ENCODE measurements at regions of chr15 and their contacts with region 1.

Region 1: GRCh38 chr15:68304589-68305337 is 27.2 kb downstream of the FEM1B start:
- DNase-seq: no peak
- ATAC-seq: no peak
- H3K4me3 ChIP-seq: no peak overlapping the region
- H3K27ac ChIP-seq: peak overlapping the region in 1 of 2 donors; percentile 20
- H3K4me1 ChIP-seq: no peaks in the 10 kb centered on the region
- H3K27me3 ChIP-seq: no peaks in the 10 kb centered on the region

Region 2: GRCh38 chr15:68252925-68253534 is 51.7 kb before region 1 on chr15:
- intact Hi-C with region 1: loop called in 1 of 2 experiments (anchors 5 kb)
- DNase-seq: no peak
- ATAC-seq: peak; percentile 66
- H3K4me3 ChIP-seq: no peak overlapping the region
- H3K27ac ChIP-seq: no peak overlapping the region
- H3K4me1 ChIP-seq: no peaks in the 10 kb centered on the region
- H3K27me3 ChIP-seq: no peaks in the 10 kb centered on the region

Region 3: GRCh38 chr15:68365140-68365745 is 60.5 kb after region 1 on chr15:
- intact Hi-C with region 1: loop called (anchors 5 kb)
- DNase-seq: no peak
- ATAC-seq: peak; percentile 59
- H3K4me3 ChIP-seq: no peak overlapping the region
- H3K27ac ChIP-seq: peak overlapping the region; percentile 93 to 99
- H3K4me1 ChIP-seq: peaks cover 0 to 10% of the 10 kb centered on the region in 2 donors
- H3K27me3 ChIP-seq: no peaks in the 10 kb centered on the region

Region 4: DNA sequence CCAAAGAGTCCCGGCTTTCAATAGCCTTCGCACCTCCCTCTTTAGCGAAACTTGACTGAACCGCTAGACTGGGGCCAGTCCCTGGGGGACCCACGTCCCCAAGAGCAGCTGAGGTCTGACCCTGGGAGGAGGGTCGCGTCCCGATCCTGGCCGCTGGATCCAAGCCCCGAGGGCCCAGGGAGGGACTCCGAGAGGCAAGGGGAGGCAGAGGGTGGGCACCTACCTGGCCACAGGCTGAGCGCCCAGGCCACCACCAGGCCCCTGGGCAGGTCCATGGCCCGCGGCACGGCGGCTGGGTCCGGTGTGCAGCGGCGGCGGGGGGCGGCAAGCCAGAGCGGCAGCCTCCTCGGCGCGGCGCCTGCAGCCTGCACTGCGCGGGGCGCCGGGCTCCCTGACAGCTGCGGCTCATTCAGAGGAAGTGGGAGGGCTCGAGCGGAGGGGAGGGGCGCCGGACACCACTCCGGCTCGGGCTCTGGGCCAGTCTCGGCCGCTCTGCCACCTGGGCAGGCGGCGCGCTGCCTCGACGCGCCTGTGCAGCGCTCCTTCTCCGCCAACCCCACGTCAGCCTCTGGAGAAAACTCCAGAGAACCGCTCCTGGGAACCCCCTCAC is 127.1 kb after region 1 on chr15 and contains the start of gene ITGA11:
- intact Hi-C with region 1: loop called in 1 of 2 experiments (anchors 5 kb)
- DNase-seq: peak; percentile 87 to 93
- ATAC-seq: peak; percentile 84
- H3K4me3 ChIP-seq: peak within 1 kb of the TSS; percentile 67 to 92
- H3K27ac ChIP-seq: peak within 1 kb of the TSS; percentile 34 to 78
- H3K4me1 ChIP-seq: peaks cover 5 to 6% of the 10 kb centered on the region in 2 donors
- H3K27me3 ChIP-seq: no peaks in the 10 kb centered on the region
- total RNA-seq, gene ITGA11: 138 to 154 TPM

Region 5: GRCh38 chr15:68672781-68673205 is 368.0 kb after region 1 on chr15:
- intact Hi-C with region 1: loop called (anchors 2 to 5 kb)
- DNase-seq: peak in 1 of 2 donors; percentile 52
- ATAC-seq: no peak
- H3K4me3 ChIP-seq: no peak overlapping the region
- H3K27ac ChIP-seq: no peak overlapping the region
- H3K4me1 ChIP-seq: no peaks in the 10 kb centered on the region
- H3K27me3 ChIP-seq: no peaks in the 10 kb centered on the region

Measured in aorta (tissue), 5 donors.